ENCODE measurements at regions of chr3 and their contacts with region 1.

Region 1: GRCh38 chr3:100708967-100709841 is at the start of gene TFG:
- DNase-seq: peak; percentile 100
- ATAC-seq: peak; percentile 95
- H3K4me3 Mint-ChIP-seq: peak within 1 kb of the TSS; percentile 83
- H3K27ac Mint-ChIP-seq: peak within 1 kb of the TSS; percentile 92
- H3K4me1 Mint-ChIP-seq: peaks cover 38% of the 10 kb centered on the region
- H3K27me3 Mint-ChIP-seq: no peaks in the 10 kb centered on the region
- total RNA-seq, gene TFG: 59.8 to 63.1 TPM

Region 2: DNA sequence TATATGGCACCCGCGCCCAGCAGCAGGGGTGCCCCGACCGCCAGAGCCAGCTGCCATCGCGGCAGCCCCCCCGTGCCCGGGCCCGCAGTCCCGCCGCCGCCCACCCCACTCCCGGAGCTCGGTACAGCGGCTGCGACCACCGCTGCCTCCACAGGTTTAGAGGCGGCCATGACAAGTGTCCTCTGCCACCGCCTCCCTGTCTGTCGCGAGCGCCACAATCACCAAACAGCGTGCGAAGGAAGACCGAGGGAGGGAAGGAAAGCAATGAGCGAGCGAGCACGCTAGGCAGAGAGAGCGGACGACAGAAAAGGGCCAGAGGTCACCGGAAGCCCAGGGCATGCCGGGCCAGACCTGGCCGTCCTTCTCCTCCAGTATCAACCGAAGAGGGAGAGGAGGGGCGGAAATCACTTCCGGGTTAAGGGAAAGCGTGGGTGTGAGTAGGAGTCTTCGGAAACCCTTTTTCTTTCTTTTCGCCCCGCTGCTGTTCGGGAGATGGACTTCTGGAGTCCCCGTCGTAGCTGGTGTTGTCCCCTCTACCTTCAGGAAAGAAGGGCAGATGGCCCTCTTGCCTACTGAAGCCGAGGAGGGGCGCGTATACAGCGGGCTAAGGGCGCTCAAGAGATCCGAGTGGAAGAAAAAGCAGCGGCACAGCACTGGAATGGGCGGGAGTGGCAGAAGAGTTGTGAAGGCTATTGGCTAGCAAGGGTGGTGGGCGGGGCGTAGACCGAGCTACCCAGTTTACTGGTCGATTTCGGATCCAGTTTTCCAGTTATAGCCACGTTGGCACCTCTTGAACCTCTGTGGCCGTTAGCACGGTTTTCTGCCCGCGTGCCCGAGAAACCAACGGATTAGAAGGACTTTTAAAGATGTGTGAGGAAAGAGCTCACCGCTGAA is 308.2 kb before region 1 on chr3 and contains the starts of genes LNP1 and TOMM70:
- CTCF ChIA-PET with region 1: interaction called, 3 read pairs
- POLR2A ChIA-PET with region 1: interaction called, 14 read pairs
- DNase-seq: peak; percentile 97
- ATAC-seq: peak; percentile 95
- H3K4me3 Mint-ChIP-seq: peak within 1 kb of the TSS; percentile 92
- H3K27ac Mint-ChIP-seq: peak within 1 kb of the TSS; percentile 98
- H3K4me1 Mint-ChIP-seq: peaks cover 57% of the 10 kb centered on the region
- H3K27me3 Mint-ChIP-seq: no peaks in the 10 kb centered on the region
- total RNA-seq, gene LNP1: 1.4 TPM
- total RNA-seq, gene TOMM70: 42.1 to 43.8 TPM

Region 3: GRCh38 chr3:100603469-100603868 is 105.7 kb before region 1 on chr3:
- CTCF ChIA-PET with region 1: interaction called, 13 read pairs
- POLR2A ChIA-PET with region 1: interaction called, 4 read pairs
- DNase-seq: no peak
- ATAC-seq: peak; percentile 52
- H3K4me3 Mint-ChIP-seq: peak overlapping the region; percentile 71
- H3K27ac Mint-ChIP-seq: peak overlapping the region; percentile 78
- H3K4me1 Mint-ChIP-seq: peaks cover 39% of the 10 kb centered on the region
- H3K27me3 Mint-ChIP-seq: peaks cover 10% of the 10 kb centered on the region

Region 4: DNA sequence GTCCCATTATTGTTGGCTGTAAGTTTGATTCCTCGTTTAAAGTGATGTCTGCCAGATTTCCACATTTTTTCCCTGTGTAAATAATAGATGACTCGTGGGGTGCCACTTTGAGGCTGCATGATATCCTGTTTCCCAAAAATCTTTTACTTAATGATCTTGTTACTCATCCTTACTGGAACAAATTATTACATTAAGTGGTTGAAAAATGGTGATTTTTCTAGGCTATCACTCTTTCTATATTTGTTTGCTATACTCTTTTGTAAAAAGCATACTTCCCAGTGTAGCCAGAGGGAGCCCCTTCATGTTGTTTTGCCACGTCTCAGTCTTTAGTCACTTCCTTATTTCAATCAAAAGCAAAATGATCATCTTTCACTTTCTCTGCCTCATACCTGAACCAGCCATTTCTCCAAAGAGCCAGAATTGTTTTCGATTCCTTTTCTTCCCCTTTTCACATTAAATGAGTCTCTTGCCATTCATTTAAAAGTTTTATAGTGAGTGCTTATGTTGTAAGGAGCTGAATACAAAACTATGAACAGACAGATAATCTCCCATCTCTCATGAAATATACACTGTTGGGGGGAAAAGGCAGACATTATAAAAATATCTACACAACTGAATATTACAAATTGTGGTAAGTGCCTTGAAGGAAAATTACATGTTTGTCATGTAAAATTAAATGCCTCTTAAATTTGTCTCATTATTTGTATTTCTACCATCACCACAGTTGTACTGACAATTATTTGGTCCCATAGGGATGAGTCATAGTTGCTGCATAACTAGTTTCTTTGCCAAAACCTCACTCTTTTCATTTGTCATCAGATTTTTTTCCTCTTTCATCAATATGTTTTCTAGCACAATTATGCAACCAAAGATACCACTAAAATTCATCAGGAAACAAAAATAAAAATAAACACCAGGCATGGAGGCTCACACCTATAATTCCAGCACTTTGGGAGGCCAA is 58.3 kb before region 1 on chr3:
- CTCF ChIA-PET with region 1: interaction called, 31 read pairs
- POLR2A ChIA-PET with region 1: interaction called, 19 read pairs
- DNase-seq: peak; percentile 65
- ATAC-seq: peak; percentile 92
- H3K4me3 Mint-ChIP-seq: peak overlapping the region; percentile 54
- H3K27ac Mint-ChIP-seq: peak overlapping the region; percentile 85
- H3K4me1 Mint-ChIP-seq: peaks cover 15% of the 10 kb centered on the region
- H3K27me3 Mint-ChIP-seq: no peaks in the 10 kb centered on the region

Region 5: DNA sequence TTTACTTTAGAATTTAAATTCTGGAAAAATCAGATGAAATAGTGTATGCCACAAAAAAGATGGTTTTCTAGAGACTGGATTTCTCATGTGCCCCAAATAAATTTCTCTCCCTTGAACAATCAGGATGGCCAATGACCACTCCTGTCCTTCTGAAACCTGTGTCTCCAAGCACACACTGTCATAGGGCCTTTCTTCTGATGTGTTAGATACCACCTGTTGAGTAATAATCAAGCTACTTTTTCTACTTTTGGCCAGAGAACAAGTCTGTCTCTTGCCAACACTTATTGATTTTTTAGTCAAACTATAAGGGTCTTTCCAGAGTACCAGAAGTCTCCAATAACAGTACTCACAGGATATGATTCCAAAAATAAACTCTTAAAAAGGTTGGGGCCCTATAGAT is 16.0 kb before region 1 on chr3:
- CTCF ChIA-PET with region 1: interaction called, 10 read pairs
- POLR2A ChIA-PET with region 1: interaction called, 9 read pairs
- DNase-seq: no peak
- ATAC-seq: no peak
- H3K4me3 Mint-ChIP-seq: no peak overlapping the region
- H3K27ac Mint-ChIP-seq: no peak overlapping the region
- H3K4me1 Mint-ChIP-seq: no peaks in the 10 kb centered on the region
- H3K27me3 Mint-ChIP-seq: peaks cover 19% of the 10 kb centered on the region

Region 6: GRCh38 chr3:100947119-100947518 is 237.9 kb after region 1 on chr3:
- CTCF ChIA-PET with region 1: no interaction called
- POLR2A ChIA-PET with region 1: no interaction called
- DNase-seq: no peak
- ATAC-seq: no peak
- H3K4me3 Mint-ChIP-seq: no peak overlapping the region
- H3K27ac Mint-ChIP-seq: no peak overlapping the region
- H3K4me1 Mint-ChIP-seq: no peaks in the 10 kb centered on the region
- H3K27me3 Mint-ChIP-seq: peaks cover 6% of the 10 kb centered on the region

Measured in activated CD8-positive, alpha-beta T cell treated with anti-CD3 and anti-CD28 coated beads, Interleukin-2, amount 10 ng/mL, durations not matched to agents 7 days and 5 days (primary cell).